Ascending aorta (tissue), 2 donors: ENCODE measurements at regions of chr3 and their contacts with region 1.

Region 1: DNA sequence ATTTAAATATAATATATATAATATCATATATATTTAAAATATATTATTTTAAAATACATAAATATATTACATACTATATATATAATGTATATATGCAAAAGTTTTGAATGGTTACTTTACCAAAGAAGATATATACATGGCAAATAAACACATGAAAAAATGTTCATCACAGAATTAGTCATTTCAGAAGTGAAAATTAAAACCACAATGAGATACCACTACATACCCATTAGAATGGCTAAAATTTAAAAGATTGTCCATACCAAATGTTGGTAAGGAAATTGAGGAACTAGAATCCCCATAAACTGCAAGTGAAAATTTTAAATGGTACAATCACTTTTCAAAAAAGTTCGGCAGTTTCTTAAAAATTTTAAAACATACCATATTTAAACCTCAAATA is 23.6 kb upstream of the COL8A1 start:
- DNase-seq: no peak
- H3K4me3 ChIP-seq: no peak overlapping the region
- H3K27ac ChIP-seq: no peak overlapping the region
- H3K4me1 ChIP-seq: no peaks in the 10 kb centered on the region
- H3K27me3 ChIP-seq: no peaks in the 10 kb centered on the region
- CTCF ChIP-seq: no peak

Region 2: DNA sequence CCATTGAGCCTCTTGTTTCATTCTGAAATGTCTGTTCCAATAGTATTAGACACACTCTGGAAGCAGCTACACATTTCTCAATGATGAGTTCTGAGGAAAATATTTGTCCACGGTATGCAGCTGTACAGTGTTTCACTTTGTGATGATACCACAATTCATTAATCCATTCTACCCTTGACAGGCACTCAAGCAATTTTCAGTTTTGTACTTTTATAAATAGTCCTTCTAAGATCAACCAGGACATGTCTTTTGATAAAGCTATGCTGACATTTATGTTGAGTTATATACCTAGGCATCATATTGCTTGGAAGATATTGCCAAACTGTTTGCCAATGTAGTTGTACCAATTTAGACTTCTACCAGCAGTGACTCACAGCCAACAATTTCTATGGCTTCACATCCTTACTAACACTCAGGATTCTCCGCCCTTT is 141.4 kb before region 1 on chr3:
- intact Hi-C with region 1: no loop called
- DNase-seq: no peak
- H3K4me3 ChIP-seq: no peak overlapping the region
- H3K27ac ChIP-seq: peak overlapping the region; percentile 81 to 91
- H3K4me1 ChIP-seq: peaks cover 6 to 14% of the 10 kb centered on the region in 2 donors
- H3K27me3 ChIP-seq: no peaks in the 10 kb centered on the region
- CTCF ChIP-seq: no peak

Region 3: GRCh38 chr3:99562138-99562537 is 52.6 kb before region 1 on chr3:
- intact Hi-C with region 1: loop called (anchors 5 kb)
- DNase-seq: no peak
- H3K4me3 ChIP-seq: no peak overlapping the region
- H3K27ac ChIP-seq: no peak overlapping the region
- H3K4me1 ChIP-seq: no peaks in the 10 kb centered on the region
- H3K27me3 ChIP-seq: no peaks in the 10 kb centered on the region
- CTCF ChIP-seq: no peak